ENCODE measurements at regions of chr7 and their contacts with region 1.

Region 1: GRCh38 chr7:41696314-41696916 is 6.5 kb downstream of the INHBA start:
- DNase-seq: peak; percentile 88
- ATAC-seq: peak; percentile 42
- H3K4me3 ChIP-seq: peak overlapping the region; percentile 91
- H3K27ac ChIP-seq: peak overlapping the region; percentile 91
- H3K4me1 ChIP-seq: peaks cover 27% of the 10 kb centered on the region
- H3K27me3 ChIP-seq: no peaks in the 10 kb centered on the region
- CTCF ChIP-seq: peak; percentile 72
- POLR2A ChIP-seq: peak; percentile 17; the same call in 1 of the 2 replicates
- RAD21 ChIP-seq: peak; percentile 73

Region 2: DNA sequence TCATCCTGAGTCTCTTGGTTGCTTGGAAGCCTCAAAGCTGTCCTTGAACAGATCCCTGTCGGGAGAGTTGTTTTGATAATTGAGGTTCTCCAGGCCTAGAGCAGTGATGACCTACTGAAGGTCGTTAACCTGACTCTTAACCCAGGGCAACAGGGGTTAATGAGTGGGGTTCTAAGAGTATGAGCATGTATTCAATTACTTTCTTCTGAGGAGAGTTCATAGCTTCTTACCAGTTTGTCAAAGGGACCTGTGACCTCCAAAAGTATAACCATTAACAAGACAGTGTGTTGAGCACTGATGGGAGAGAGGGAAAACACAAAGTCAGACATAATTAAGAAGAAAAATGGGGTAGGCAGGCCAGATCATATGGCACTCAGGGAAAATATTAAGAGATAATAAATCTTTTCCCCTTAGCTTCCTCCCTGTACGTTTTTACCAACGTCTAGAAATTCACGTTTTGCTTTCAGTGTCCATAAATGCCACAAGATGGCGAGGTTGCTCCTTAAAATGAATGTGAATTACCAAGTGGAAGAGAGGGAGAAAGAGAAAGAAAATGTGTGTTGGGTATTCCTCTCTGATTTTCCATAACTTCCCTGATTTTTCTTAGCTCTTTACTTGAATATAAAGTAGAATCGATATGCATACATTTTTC is 1464.0 kb before region 1 on chr7:
- CTCF ChIA-PET with region 1: interaction called, 4 read pairs
- POLR2A ChIA-PET with region 1: no interaction called
- dilution Hi-C with region 1: no loop called
- in situ Hi-C with region 1: no loop called
- intact Hi-C with region 1: loop called (anchors 2 kb)
- DNase-seq: peak; percentile 80
- ATAC-seq: peak; percentile 89
- H3K4me3 ChIP-seq: no peak overlapping the region
- H3K27ac ChIP-seq: no peak overlapping the region
- H3K4me1 ChIP-seq: peaks cover 4% of the 10 kb centered on the region; the same call in 1 of the 2 replicates
- H3K27me3 ChIP-seq: no peaks in the 10 kb centered on the region
- CTCF ChIP-seq: peak; percentile 81
- POLR2A ChIP-seq: no peak
- RAD21 ChIP-seq: peak; percentile 84

Region 3: GRCh38 chr7:40918701-40919271 is 777.6 kb before region 1 on chr7:
- CTCF ChIA-PET with region 1: no interaction called
- POLR2A ChIA-PET with region 1: no interaction called
- dilution Hi-C with region 1: no loop called
- in situ Hi-C with region 1: no loop called
- intact Hi-C with region 1: loop called (anchors 2 kb)
- DNase-seq: peak; percentile 93
- ATAC-seq: peak; percentile 88
- H3K4me3 ChIP-seq: no peak overlapping the region
- H3K27ac ChIP-seq: peak overlapping the region; percentile 79
- H3K4me1 ChIP-seq: peaks cover 17% of the 10 kb centered on the region
- H3K27me3 ChIP-seq: no peaks in the 10 kb centered on the region
- CTCF ChIP-seq: no peak
- POLR2A ChIP-seq: no peak
- RAD21 ChIP-seq: no peak

Region 4: GRCh38 chr7:41051535-41051934 is 644.9 kb before region 1 on chr7:
- CTCF ChIA-PET with region 1: interaction called, 6 read pairs
- POLR2A ChIA-PET with region 1: interaction called, 5 read pairs
- dilution Hi-C with region 1: no loop called
- in situ Hi-C with region 1: no loop called
- intact Hi-C with region 1: loop called (anchors 2 kb)
- DNase-seq: no peak
- ATAC-seq: no peak
- H3K4me3 ChIP-seq: no peak overlapping the region
- H3K27ac ChIP-seq: no peak overlapping the region
- H3K4me1 ChIP-seq: peaks cover 18% of the 10 kb centered on the region
- H3K27me3 ChIP-seq: no peaks in the 10 kb centered on the region
- CTCF ChIP-seq: no peak
- POLR2A ChIP-seq: no peak
- RAD21 ChIP-seq: no peak

Region 5: DNA sequence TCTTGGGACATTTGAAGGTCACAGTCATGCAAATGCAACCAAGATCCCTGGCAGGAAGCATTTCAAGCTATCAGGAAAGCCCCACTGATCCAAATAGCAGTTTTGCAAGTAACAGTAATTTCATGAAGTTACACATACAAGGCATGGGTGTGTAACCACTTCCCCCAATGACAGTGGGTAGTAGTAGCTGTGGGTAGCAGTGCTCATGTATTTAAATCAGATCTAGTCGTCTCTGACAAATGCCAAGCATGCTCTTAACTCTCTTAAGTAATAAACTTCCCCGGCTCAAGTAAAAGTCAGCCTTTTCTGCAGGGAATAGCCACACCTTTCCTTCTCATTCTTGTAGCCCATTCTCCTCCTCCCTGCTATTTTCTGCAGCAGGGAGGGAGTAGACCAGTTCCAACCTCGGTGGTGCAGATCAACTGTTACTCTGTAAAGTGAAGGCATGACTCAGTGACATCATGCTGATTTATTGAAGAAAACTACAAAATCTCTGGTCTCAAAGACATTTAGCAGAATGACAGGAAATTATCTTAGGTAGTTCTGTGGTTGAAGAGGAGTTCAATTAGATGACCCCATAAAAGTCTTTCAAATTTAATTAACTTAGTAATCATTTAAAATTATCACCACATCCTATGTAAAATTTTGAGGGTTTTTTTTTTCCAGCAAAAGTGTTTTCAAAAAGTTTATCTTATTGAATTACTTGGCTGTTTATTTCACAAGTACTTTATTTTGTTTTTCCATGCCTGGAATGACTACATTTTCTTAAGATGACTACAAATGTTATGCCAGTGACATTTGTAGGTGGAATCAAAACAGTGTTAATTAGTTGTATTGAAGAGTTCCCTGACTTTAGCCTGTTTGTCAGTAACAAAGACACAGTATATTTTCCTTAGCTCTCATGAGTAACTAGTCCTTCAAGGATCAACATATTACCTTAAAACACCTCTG is 561.8 kb before region 1 on chr7:
- CTCF ChIA-PET with region 1: no interaction called
- POLR2A ChIA-PET with region 1: no interaction called
- dilution Hi-C with region 1: no loop called
- in situ Hi-C with region 1: no loop called
- intact Hi-C with region 1: no loop called
- DNase-seq: peak; percentile 55
- ATAC-seq: peak; percentile 72
- H3K4me3 ChIP-seq: no peak overlapping the region
- H3K27ac ChIP-seq: no peak overlapping the region
- H3K4me1 ChIP-seq: peaks cover 9% of the 10 kb centered on the region
- H3K27me3 ChIP-seq: no peaks in the 10 kb centered on the region
- CTCF ChIP-seq: no peak
- POLR2A ChIP-seq: no peak
- RAD21 ChIP-seq: no peak

Region 6: GRCh38 chr7:41306486-41306885 is 389.9 kb before region 1 on chr7:
- CTCF ChIA-PET with region 1: no interaction called
- POLR2A ChIA-PET with region 1: no interaction called
- dilution Hi-C with region 1: no loop called
- in situ Hi-C with region 1: no loop called
- intact Hi-C with region 1: loop called (anchors 5 kb)
- DNase-seq: no peak
- ATAC-seq: no peak
- H3K4me3 ChIP-seq: no peak overlapping the region
- H3K27ac ChIP-seq: no peak overlapping the region
- H3K4me1 ChIP-seq: no peaks in the 10 kb centered on the region
- H3K27me3 ChIP-seq: no peaks in the 10 kb centered on the region
- CTCF ChIP-seq: no peak
- POLR2A ChIP-seq: no peak
- RAD21 ChIP-seq: no peak

Region 7: GRCh38 chr7:41425926-41426325 is 270.5 kb before region 1 on chr7:
- CTCF ChIA-PET with region 1: no interaction called
- POLR2A ChIA-PET with region 1: no interaction called
- dilution Hi-C with region 1: no loop called
- in situ Hi-C with region 1: no loop called
- intact Hi-C with region 1: loop called (anchors 5 kb)
- DNase-seq: peak; percentile 92
- ATAC-seq: peak; percentile 90
- H3K4me3 ChIP-seq: no peak overlapping the region
- H3K27ac ChIP-seq: no peak overlapping the region; the same call in 1 of the 2 replicates
- H3K4me1 ChIP-seq: peaks cover 11% of the 10 kb centered on the region
- H3K27me3 ChIP-seq: no peaks in the 10 kb centered on the region
- CTCF ChIP-seq: no peak
- POLR2A ChIP-seq: no peak
- RAD21 ChIP-seq: peak; percentile 12; the same call in 1 of the 2 replicates